Common myeloid progenitor, CD34-positive (primary cell): ENCODE measurements at regions of chr7 and their contacts with region 1.

Region 1: DNA sequence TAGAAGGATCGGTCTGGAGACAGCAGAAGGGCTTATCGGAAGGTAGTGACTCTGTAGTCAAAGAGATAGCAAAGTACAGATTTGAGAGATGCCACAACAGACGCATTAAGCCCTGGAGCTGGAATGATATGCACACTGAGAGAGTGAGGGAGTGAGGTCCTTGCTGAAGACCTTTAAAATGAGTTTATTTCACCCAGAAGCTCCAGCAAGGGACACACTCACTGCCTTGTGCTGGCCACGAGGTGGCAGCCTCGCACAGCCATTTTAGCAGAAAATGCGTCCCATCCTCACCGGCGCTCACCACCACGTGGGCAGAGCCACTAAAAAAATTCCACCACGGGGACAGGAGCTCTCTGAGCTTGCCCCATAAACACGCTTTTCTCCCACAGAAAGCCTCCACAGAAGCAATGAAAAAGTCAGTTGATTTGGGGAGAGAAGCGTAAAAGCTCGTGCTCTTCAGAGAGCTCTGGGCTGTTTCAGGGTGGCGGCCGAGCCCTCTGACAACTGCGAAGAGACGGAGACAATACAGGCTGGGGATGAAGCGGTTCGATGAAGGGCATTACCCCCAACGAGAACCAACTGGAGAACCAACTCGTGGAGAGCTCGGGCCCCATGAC is 163.0 kb upstream of the KLF14 start:
- DNase-seq: peak; percentile 83 to 91 (median 88)
- H3K4me3 ChIP-seq: no peak overlapping the region
- H3K27ac ChIP-seq: no peak overlapping the region
- H3K4me1 ChIP-seq: peaks cover 0 to 28% (median 12%) of the 10 kb centered on the region in 4 experiments
- H3K27me3 ChIP-seq: no peaks in the 10 kb centered on the region

Region 2: DNA sequence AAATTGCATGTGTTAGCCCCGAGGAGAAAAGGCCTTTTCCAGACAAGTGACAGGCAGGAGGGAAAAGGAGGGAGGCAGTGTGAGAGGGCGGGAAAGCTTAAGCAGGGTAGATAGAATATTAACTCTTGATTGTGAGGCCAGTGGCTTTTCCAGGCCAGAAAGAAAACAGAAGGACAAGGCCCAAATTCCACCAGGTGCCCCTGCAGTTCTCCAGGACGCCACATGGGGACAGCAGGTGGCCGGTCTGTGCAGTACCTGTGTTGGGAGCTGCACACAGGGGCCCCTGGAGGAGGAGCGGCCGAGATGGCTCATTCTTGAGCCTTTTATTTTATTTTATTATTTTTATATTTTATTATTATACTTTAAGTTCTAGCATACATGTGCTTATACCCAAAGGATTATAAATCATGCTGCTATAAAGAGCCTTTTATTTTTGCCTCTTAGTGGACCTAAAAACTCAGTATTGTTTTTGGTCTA is 21.7 kb before region 1 on chr7:
- CTCF ChIA-PET with region 1: interaction called, 14 read pairs
- POLR2A ChIA-PET with region 1: no interaction called
- DNase-seq: peak; percentile 40 to 49 (median 46)
- H3K4me3 ChIP-seq: no peak overlapping the region
- H3K27ac ChIP-seq: no peak overlapping the region
- H3K4me1 ChIP-seq: peaks cover 0 to 9% (median 3%) of the 10 kb centered on the region in 4 experiments
- H3K27me3 ChIP-seq: no peaks in the 10 kb centered on the region

Region 3: DNA sequence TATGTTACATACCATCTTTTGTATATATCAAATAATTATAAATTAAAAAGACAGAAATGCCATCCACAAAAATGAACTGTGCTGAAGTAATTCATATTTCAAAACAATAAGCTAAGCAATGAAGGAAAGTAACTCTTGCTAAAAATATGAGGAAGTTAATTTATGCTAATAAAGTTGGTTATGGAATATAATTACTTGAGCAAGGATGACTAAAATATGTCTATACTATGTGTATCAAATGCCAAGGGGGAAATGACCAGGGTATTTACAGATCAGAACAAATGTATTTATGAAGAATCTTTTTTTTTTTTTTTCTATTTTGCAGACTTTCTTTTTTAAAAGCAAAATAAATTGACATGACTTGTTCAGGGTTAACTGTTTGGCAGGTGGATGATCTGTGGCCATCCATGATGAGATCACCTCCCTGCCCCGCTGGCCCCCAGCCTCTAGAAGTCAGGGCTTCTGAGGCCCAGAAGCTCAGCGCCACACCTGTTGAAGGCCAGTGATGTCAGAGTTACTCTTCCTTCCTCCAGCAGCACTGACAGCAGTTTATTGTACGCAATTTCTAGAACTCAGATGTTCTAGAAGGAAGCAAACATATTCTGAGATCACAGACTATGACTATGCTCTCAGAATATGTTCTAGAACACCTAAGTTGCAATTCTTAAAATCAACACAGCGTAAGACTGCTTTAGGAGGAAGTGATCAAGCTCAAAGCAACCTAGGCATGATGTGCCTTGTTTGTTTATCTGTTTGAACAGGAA is 33.1 kb after region 1 on chr7:
- CTCF ChIA-PET with region 1: interaction called, 14 read pairs
- POLR2A ChIA-PET with region 1: no interaction called
- DNase-seq: peak in 2 of 3 donors; percentile 50 to 68
- H3K4me3 ChIP-seq: no peak overlapping the region
- H3K27ac ChIP-seq: no peak overlapping the region
- H3K4me1 ChIP-seq: peaks cover 6 to 38% (median 24%) of the 10 kb centered on the region in 4 experiments
- H3K27me3 ChIP-seq: no peaks in the 10 kb centered on the region

Region 4: DNA sequence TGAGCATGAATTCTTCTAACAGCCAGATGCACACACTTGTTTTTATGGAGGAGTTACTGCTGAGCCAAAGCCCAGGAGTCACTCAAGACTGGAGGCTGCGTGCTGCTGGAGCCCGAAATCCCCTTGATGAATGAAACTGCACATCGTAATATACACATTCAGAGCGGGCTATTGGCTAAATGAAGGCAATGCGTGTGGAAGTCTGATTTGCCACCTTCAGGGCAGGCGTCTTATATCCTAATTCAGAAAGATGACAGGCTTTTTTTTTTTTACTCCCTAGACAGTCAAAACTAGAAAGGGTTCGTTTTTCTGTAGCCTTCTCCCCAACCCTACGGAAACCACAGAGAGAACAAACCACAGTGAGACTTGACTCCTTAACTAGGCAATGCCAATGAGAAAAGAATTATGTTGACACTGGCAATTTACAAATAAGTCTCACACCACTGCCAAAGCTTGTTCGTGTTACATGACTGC is 64.2 kb after region 1 on chr7:
- CTCF ChIA-PET with region 1: interaction called, 15 read pairs
- POLR2A ChIA-PET with region 1: no interaction called
- DNase-seq: peak; percentile 30 to 88 (median 83)
- H3K4me3 ChIP-seq: peak overlapping the region in 4 of 7 experiments; percentile 19 to 68 (median 62)
- H3K27ac ChIP-seq: peak overlapping the region; percentile 36 to 70
- H3K4me1 ChIP-seq: peaks cover 20 to 71% (median 38%) of the 10 kb centered on the region in 4 experiments
- H3K27me3 ChIP-seq: no peaks in the 10 kb centered on the region

Region 5: DNA sequence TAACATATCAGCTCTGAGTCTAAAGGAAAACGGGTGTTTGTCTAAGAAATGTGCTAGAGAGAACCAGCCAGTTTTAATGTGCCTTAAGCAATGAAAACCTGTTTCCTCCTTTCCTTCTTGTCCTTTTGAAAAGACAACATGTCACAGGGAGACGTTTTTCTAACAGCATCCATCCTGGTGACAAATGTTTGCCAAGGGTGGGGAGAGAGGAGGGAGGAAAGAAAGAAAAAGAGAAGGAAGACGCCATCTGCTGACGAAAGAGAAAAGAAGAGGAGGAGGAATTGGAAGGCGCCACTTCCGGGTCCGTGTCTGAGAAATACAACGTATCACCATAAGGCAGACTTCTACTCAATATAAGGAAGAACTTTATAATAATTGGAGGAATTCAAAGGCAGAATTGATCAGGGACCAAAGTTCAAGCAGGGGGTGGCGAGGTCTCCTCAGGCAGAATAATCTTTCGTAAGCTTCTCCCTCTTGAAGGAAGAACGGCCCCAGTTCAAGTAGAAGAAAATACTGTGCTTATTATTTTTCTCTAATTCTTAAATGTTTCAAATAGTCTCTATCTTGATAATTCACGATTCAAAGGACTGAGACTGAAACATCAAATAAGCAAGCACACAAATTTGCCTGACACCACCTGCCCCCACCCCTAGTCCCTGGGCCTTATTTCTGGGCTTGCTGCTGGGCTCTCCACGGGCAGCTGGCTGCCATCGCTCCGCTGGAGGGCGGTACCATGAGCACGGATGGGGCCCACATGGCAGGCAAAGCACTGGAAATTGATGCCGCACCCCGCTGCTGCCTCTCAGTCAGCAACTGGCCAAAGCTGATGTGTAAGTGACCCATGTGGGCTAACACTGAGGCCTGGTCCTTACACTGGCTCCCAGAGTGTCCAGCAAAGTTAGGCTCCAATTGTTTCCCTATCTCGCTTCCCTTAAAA is 110.7 kb after region 1 on chr7:
- CTCF ChIA-PET with region 1: interaction called, 48 read pairs
- POLR2A ChIA-PET with region 1: no interaction called
- DNase-seq: peak; percentile 82 to 89 (median 85)
- H3K4me3 ChIP-seq: peak overlapping the region in 4 of 7 experiments; percentile 11 to 37 (median 24)
- H3K27ac ChIP-seq: peak overlapping the region; percentile 37 to 82
- H3K4me1 ChIP-seq: peaks cover 18 to 70% (median 57%) of the 10 kb centered on the region in 4 experiments
- H3K27me3 ChIP-seq: no peaks in the 10 kb centered on the region

Region 6: DNA sequence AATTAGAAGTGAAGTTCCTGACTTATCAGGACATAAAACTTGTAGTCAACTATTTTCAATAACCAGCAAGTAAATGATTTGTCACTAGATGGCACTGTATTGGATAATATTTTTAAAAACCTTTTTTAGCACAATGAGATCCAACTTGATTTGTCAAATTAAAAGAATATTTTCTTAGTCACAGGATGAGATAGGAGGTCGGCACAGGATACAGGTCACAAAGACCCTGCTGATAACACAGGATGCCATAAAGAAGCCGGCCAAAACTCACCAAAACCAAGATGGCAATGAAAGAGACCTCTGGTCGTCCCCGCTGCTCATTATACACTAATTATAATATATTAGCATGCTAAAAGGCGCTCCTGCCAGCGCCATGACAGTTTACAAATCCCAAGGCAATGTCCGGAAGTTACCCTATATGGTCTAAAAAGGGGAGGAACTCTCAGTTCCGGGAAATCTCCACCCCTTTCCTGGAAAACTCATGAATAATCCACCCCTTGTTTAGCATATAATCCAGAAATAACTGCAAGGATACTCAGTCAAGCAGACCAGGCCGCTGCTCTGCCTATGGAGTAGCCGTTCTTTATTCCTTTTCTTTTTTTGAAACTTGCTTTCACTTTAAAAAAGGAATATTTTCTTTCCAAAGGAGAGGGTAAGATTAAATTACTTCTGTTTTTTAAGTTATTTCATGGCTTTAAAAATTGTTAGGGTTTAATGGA is 174.9 kb after region 1 on chr7:
- CTCF ChIA-PET with region 1: interaction called, 15 read pairs
- POLR2A ChIA-PET with region 1: no interaction called
- DNase-seq: peak in 2 of 3 donors; percentile 61 to 62
- H3K4me3 ChIP-seq: no peak overlapping the region
- H3K27ac ChIP-seq: peak overlapping the region in 1 of 2 experiments; percentile 58
- H3K4me1 ChIP-seq: peaks cover 0 to 25% (median 15%) of the 10 kb centered on the region in 4 experiments
- H3K27me3 ChIP-seq: no peaks in the 10 kb centered on the region